HepG2 (cell line): ENCODE measurements at regions of chr9 and their contacts with region 1.

Region 1: DNA sequence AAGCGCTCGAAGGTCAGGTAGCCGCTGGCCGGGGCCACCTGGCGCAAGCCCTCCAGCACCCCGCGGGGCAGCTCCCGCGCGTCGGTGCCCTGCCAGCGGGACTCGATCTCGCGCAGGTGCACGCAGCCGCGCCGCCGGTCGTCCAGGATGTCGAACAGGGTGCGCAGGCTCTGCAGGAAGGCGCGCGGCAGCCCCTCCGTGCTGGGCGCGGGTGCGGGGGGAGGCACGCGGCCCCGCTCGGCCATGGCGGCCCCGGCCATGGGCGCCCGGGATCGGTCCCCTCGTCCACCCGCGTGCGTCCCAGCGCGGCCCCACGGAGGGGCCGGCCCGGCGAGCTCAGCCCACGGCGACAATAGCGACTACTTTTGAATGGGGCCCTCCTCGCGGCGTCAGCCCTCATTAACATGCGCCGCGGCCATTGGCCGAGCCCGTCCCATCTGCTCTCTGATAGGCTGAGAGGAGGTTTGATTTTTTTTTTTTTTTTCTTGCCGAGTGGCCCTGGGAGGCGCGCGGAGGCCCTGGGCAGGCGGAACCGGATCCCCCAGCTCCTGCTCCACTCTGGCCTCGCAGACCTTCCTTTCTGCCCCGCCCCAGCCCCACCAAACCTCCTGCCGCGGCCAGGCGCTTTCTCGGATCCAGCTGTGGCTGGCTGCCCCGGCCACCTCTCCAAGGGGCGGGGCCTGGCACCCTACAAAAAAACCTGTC is at the start of gene SAPCD2:
- DNase-seq: peak; percentile 88
- ATAC-seq: peak; percentile 81
- H3K4me3 ChIP-seq: peak within 1 kb of the TSS; percentile 58 to 88 (median 74)
- H3K27ac ChIP-seq: peak within 1 kb of the TSS; percentile 70
- H3K4me1 ChIP-seq: peaks cover 57% of the 10 kb centered on the region
- H3K27me3 ChIP-seq: no peaks in the 10 kb centered on the region; a peak in 1 of 5 replicates
- CTCF ChIP-seq: no peak
- EP300 ChIP-seq: no peak
- POLR2A ChIP-seq: no peak; a peak in 1 of 4 replicates
- RAD21 ChIP-seq: peak; percentile 14; the same call in 1 of the 2 replicates
- total RNA-seq, gene SAPCD2: 35.9 and 42.8 TPM in 2 replicates

Region 2: GRCh38 chr9:137046098-137046787 is 24.1 kb before region 1 on chr9 and contains the start of gene NPDC1:
- CTCF ChIA-PET with region 1: interaction called, 25 read pairs
- POLR2A ChIA-PET with region 1: interaction called, 9 read pairs
- in situ Hi-C with region 1: no loop called
- intact Hi-C with region 1: loop called (anchors 1 kb)
- DNase-seq: peak; percentile 71
- ATAC-seq: peak; percentile 76
- H3K4me3 ChIP-seq: peak within 1 kb of the TSS; percentile 57 to 77 (median 58); a peak in 5 of 6 replicates
- H3K27ac ChIP-seq: no peak within 1 kb of the TSS
- H3K4me1 ChIP-seq: peaks cover 25% of the 10 kb centered on the region
- H3K27me3 ChIP-seq: peaks cover 3 to 27% of the 10 kb centered on the region in 2 experiments; a peak in 4 of 5 replicates
- CTCF ChIP-seq: peak; percentile 93
- EP300 ChIP-seq: no peak
- POLR2A ChIP-seq: no peak
- RAD21 ChIP-seq: peak; percentile 89
- total RNA-seq, gene NPDC1: 0.63 and 0.84 TPM in 2 replicates

Region 3: DNA sequence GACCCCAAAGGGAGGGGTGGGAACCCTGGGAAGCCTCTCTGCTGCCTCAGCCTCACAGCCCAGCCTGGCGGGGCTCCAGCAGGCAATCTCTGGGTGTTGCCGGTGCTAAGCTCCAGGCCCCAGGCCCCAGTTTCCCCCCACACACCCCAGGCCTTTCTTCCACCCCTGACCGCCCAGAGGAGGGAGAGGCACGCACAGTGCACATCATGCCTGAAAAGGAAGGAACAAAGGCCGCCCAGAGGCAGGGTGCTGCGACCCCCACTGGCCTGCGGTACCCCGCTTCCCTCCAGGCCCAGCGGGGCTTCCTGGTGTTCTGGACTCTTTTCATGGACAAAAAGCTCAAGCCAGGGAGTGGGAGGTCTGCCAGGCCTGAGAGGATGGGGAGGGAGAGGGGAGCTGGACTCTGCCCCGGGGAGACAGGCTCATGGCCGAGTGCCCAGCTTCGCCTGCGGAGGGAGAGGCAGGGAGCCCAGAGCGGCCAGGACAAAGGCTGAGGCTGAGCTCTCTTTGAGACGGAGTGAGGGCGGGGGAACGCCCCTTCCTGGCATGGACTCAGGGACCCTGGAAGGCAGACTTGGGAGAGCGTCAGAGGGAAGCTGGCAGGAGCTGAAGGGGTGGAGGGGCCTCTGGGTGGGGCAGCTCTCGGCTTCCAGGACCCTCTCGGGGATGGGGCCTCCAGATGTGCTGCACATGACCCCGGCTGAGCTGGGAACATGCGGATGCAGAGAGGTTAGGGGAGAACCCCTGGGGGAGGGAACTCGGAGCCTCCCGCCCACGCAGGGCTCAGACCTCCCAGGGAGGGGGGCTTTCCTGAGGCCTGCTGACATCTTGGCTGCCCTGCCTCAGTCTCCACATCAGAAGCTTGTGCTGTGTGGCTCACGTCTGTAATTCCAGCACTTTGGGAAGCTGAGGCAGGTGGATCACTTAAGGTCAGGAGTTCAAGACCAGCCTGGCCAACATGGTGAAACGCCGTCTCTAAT is 14.7 kb before region 1 on chr9:
- CTCF ChIA-PET with region 1: interaction called, 12 read pairs
- POLR2A ChIA-PET with region 1: interaction called, 55 read pairs
- in situ Hi-C with region 1: no loop called
- intact Hi-C with region 1: no loop called
- DNase-seq: peak; percentile 86
- ATAC-seq: peak; percentile 79
- H3K4me3 ChIP-seq: peak overlapping the region; percentile 64 to 84 (median 70)
- H3K27ac ChIP-seq: peak overlapping the region; percentile 96
- H3K4me1 ChIP-seq: peaks cover 57% of the 10 kb centered on the region
- H3K27me3 ChIP-seq: no peaks in the 10 kb centered on the region; a peak in 2 of 5 replicates
- CTCF ChIP-seq: peak; percentile 29
- EP300 ChIP-seq: peak in 1 of 2 experiments; percentile 47; a peak in 1 of 4 replicates
- POLR2A ChIP-seq: no peak
- RAD21 ChIP-seq: no peak

Region 4: GRCh38 chr9:137086531-137087408 is 16.4 kb after region 1 on chr9 and contains the start of gene MAN1B1:
- CTCF ChIA-PET with region 1: interaction called, 5 read pairs
- POLR2A ChIA-PET with region 1: interaction called, 105 read pairs
- in situ Hi-C with region 1: no loop called
- intact Hi-C with region 1: no loop called
- DNase-seq: peak; percentile 97
- ATAC-seq: peak; percentile 87
- H3K4me3 ChIP-seq: peak within 1 kb of the TSS; percentile 77 to 89 (median 79)
- H3K27ac ChIP-seq: peak within 1 kb of the TSS; percentile 83
- H3K4me1 ChIP-seq: peaks cover 59% of the 10 kb centered on the region
- H3K27me3 ChIP-seq: no peaks in the 10 kb centered on the region; a peak in 1 of 5 replicates
- CTCF ChIP-seq: peak; percentile 45
- EP300 ChIP-seq: no peak
- POLR2A ChIP-seq: peak in 1 of 2 experiments; percentile 65; a peak in 2 of 4 replicates
- RAD21 ChIP-seq: peak; percentile 53; the same call in 1 of the 2 replicates
- total RNA-seq, gene MAN1B1: 19.0 and 48.9 TPM in 2 replicates